Mammary epithelial cell (primary cell): ENCODE measurements at regions of chr15 and their contacts with region 1.

Region 1: DNA sequence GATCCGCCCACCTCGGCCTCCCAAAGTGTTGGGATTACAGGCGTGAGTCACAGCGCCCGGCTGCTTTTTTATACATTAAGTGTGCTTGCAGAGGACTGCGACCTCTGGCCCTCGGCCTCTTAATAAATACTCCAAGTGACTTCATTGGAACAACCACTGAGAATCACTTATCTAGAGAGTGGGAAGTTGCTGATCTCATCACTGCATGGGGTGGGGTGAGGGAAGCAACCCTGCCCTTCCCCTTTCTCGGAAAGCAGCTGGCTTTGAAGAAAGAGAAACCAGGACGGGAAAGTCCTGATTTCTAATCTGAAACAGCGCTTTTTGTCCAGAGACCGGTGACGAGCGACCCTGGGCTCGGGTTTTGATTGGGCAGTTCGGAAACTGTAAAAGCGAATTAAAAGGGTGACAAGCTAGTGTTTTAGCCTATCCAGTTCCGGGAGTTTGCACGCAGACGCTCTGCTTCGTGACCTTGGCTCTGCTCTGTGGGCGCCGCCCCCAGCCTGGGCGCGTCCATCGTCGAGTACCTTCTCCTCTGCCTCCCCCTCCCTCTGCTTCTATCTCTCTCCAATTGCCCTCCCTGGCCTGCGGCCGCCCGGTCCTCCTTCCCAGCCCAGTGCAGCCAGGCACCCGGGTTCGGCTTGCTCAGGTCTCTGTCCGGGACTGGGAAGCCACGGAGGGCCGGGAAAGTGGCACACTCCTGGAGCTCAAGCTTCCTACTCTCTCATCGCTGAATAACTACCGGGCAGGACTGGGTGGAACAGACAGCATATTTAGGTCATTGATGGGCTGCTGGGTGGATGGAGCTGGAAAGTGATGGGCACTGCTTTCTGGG is 7.5 kb upstream of the TRIM69 start:
- DNase-seq: peak; percentile 99
- H3K4me3 ChIP-seq: peak overlapping the region; percentile 70 to 83 (median 76)
- H3K27ac ChIP-seq: peak overlapping the region; percentile 91
- H3K4me1 ChIP-seq: peaks cover 20% of the 10 kb centered on the region
- H3K27me3 ChIP-seq: no peaks in the 10 kb centered on the region
- CTCF ChIP-seq: no peak

Region 2: GRCh38 chr15:44647036-44647435 is 81.8 kb before region 1 on chr15:
- CTCF ChIA-PET with region 1: no interaction called
- dilution Hi-C with region 1: loop called (anchors 5 kb)
- in situ Hi-C with region 1: no loop called
- intact Hi-C with region 1: no loop called
- DNase-seq: no peak
- H3K4me3 ChIP-seq: no peak overlapping the region
- H3K27ac ChIP-seq: no peak overlapping the region
- H3K4me1 ChIP-seq: peaks cover 4% of the 10 kb centered on the region
- H3K27me3 ChIP-seq: no peaks in the 10 kb centered on the region
- CTCF ChIP-seq: no peak

Region 3: DNA sequence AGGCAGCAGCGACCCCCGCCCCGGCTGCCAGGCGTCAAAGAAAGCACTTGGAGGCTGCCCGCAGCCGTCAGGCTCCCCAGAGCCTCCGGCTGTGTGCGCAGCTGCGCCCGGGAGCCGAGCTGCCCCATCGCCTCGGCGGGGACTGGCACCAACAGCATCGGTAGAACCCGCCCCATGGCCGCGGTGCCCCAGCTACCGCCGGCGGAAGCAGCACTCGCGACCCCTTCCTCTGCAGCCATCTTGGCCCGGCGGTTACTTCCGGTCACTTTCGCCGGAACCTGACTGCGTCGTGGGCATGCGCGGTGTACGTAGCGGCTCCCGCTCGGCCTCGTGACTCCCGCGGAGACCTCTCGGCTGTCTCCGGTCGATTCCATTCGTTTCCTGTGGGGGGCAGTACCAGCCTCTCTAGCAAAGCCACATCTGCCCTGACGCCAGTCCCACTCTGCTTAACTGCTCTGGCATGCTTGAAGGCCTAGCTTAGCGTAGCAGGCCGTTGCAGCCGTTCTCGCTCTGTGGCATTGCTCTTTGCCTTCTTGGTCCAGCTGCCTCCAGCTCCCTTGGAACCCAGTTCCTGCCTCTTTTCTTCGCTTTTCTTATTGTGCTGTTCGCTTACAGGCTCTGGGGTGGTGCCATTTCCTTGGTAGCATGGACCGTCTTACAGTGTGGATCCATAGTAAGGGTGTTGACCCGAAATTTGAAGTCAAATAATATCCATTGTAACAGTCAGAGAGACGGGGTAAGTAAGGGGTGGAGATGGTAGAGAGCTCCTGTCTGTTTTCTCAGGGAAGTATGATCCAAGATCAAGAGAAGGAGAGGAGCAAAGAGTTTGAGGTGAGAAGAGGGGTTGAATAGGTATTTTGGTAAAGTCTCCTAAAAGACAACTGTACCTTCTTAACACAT is 65.1 kb before region 1 on chr15 and contains the start of gene SPG11:
- CTCF ChIA-PET with region 1: interaction called, 6 read pairs
- dilution Hi-C with region 1: no loop called
- in situ Hi-C with region 1: loop called (anchors 5 to 10 kb)
- intact Hi-C with region 1: loop called (anchors 1 kb)
- DNase-seq: peak; percentile 94
- H3K4me3 ChIP-seq: peak within 1 kb of the TSS; percentile 67 to 89 (median 82)
- H3K27ac ChIP-seq: peak within 1 kb of the TSS; percentile 58
- H3K4me1 ChIP-seq: peaks cover 15% of the 10 kb centered on the region
- H3K27me3 ChIP-seq: no peaks in the 10 kb centered on the region
- CTCF ChIP-seq: peak; percentile 80 to 82
- total RNA-seq, gene SPG11: 55.4 to 76.2 TPM

Region 4: GRCh38 chr15:44788748-44789147 is 60.0 kb after region 1 on chr15:
- CTCF ChIA-PET with region 1: no interaction called
- dilution Hi-C with region 1: loop called (anchors 5 kb)
- in situ Hi-C with region 1: no loop called
- intact Hi-C with region 1: no loop called
- DNase-seq: no peak
- H3K4me3 ChIP-seq: no peak overlapping the region
- H3K27ac ChIP-seq: no peak overlapping the region
- H3K4me1 ChIP-seq: peaks cover 3% of the 10 kb centered on the region
- H3K27me3 ChIP-seq: no peaks in the 10 kb centered on the region
- CTCF ChIP-seq: no peak

Region 5: DNA sequence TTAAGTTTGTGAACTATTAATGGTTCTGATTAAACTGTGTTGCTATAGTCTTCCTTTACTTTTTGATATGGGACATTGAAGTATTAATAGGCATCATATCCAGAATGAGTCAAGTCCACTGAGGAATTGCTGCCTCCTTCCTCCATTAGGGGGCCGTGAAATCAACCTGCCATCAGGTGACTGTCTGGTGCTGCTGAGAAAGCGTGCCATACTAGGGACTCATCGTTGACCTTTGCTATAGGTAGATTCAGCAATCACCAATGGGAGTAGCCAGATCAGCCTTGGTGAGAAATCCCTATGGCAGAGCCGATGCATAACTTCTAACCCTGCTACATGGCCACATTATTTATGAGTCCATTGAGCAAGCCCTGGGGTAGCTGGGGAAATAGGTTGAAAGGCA is 493.2 kb after region 1 on chr15:
- CTCF ChIA-PET with region 1: no interaction called
- dilution Hi-C with region 1: no loop called
- in situ Hi-C with region 1: no loop called
- intact Hi-C with region 1: no loop called
- DNase-seq: no peak
- H3K4me3 ChIP-seq: no peak overlapping the region
- H3K27ac ChIP-seq: no peak overlapping the region
- H3K4me1 ChIP-seq: no peaks in the 10 kb centered on the region
- H3K27me3 ChIP-seq: peaks cover 2% of the 10 kb centered on the region
- CTCF ChIP-seq: no peak